MCF 10A (cell line): ENCODE measurements at regions of chrX and their contacts with region 1.

Region 1: DNA sequence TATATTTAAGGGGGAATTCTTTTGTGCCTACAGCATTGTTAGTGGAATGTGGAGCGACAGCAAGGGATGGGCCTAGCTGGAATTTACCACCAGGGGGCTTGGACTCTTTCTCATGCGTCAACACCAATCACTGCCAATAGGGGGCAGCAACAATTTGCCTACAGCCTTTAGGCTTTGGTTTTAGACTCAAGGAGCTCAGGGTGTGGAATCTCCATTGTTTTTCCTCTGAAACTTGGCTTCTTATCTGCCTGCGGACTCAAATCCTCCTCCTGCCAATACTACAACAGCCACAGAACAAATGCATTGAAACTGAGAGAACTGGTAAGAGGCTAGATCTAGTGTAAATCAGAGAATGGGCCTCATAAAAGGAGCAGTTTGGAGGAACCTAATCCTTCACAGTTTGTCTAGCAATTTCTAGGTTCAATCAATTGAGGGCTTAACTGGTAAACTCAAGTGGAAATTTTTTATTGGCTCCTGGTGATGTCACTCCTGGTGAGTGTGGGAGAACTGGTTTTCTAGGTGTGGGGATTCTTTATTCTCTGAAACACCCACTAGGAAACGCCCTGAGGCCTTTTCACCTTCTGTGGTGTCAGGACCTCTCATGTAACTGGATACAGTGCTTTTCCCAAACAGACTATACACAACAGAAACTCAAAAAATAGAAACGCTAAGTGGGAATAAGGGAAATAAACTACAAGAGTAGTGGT is 27.9 kb upstream of the TMSB4X start:
- DNase-seq: peak; percentile 91
- H3K4me3 Mint-ChIP-seq: no peak overlapping the region
- H3K27ac Mint-ChIP-seq: peak overlapping the region; percentile 80
- H3K4me1 Mint-ChIP-seq: peaks cover 12% of the 10 kb centered on the region
- H3K27me3 Mint-ChIP-seq: peaks cover 27% of the 10 kb centered on the region
- CTCF ChIP-seq: peak; percentile 98

Region 2: DNA sequence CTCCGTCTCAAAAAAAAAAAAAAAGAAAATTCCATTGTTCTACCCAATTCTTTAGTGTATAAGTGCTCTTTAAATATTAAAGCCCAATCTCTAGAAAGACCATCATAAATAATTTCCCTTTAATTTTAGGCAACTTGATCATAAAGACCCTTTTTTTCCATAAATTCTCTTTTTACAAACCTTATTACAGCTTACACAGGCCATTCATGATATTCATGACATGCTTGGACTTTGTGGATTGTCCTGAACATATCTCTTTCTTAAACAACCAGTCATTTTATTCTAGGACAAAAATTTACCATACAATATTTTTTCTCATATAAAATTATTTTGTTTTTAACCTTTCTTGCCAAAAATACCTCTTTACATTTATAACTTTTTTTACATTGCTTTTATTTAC is 10.0 kb before region 1 on chrX:
- CTCF ChIA-PET with region 1: interaction called, 17 read pairs
- POLR2A ChIA-PET with region 1: no interaction called
- intact Hi-C with region 1: no loop called
- DNase-seq: no peak
- H3K4me3 Mint-ChIP-seq: no peak overlapping the region
- H3K27ac Mint-ChIP-seq: no peak overlapping the region
- H3K4me1 Mint-ChIP-seq: no peaks in the 10 kb centered on the region
- H3K27me3 Mint-ChIP-seq: peaks cover 25% of the 10 kb centered on the region
- CTCF ChIP-seq: no peak

Region 3: GRCh38 chrX:13110433-13111324 is 163.7 kb after region 1 on chrX:
- CTCF ChIA-PET with region 1: interaction called, 8 read pairs
- POLR2A ChIA-PET with region 1: no interaction called
- intact Hi-C with region 1: loop called (anchors 10 kb)
- DNase-seq: peak; percentile 92
- H3K4me3 Mint-ChIP-seq: no peak overlapping the region
- H3K27ac Mint-ChIP-seq: peak overlapping the region; percentile 76
- H3K4me1 Mint-ChIP-seq: peaks cover 10% of the 10 kb centered on the region
- H3K27me3 Mint-ChIP-seq: no peaks in the 10 kb centered on the region
- CTCF ChIP-seq: no peak

Region 4: GRCh38 chrX:13398073-13398823 is 451.3 kb after region 1 on chrX:
- CTCF ChIA-PET with region 1: interaction called, 6 read pairs
- POLR2A ChIA-PET with region 1: no interaction called
- intact Hi-C with region 1: loop called (anchors 2 kb)
- DNase-seq: peak; percentile 98
- H3K4me3 Mint-ChIP-seq: peak overlapping the region; percentile 10
- H3K27ac Mint-ChIP-seq: peak overlapping the region; percentile 83
- H3K4me1 Mint-ChIP-seq: peaks cover 33% of the 10 kb centered on the region
- H3K27me3 Mint-ChIP-seq: peaks cover 11% of the 10 kb centered on the region
- CTCF ChIP-seq: no peak

Region 5: GRCh38 chrX:13495232-13495631 is 548.2 kb after region 1 on chrX:
- CTCF ChIA-PET with region 1: interaction called, 241 read pairs
- POLR2A ChIA-PET with region 1: interaction called, 3 read pairs
- intact Hi-C with region 1: no loop called
- DNase-seq: no peak
- H3K4me3 Mint-ChIP-seq: no peak overlapping the region
- H3K27ac Mint-ChIP-seq: peak overlapping the region; percentile 25
- H3K4me1 Mint-ChIP-seq: peaks cover 4% of the 10 kb centered on the region
- H3K27me3 Mint-ChIP-seq: peaks cover 55% of the 10 kb centered on the region
- CTCF ChIP-seq: no peak